Activated CD4-positive, alpha-beta memory T cell treated with anti-CD3 and anti-CD28 coated beads, Interleukin-2, amount 10 ng/mL, durations not matched to agents 7 days and 5 days (primary cell): ENCODE measurements at regions of chr16 and their contacts with region 1.

Region 1: GRCh38 chr16:71499775-71500364 is 10.7 kb upstream of the ZNF19 start:
- DNase-seq: peak; percentile 51
- H3K4me3 Mint-ChIP-seq: no peak overlapping the region
- H3K27ac Mint-ChIP-seq: no peak overlapping the region
- H3K4me1 Mint-ChIP-seq: no peaks in the 10 kb centered on the region
- H3K27me3 Mint-ChIP-seq: peaks cover 3% of the 10 kb centered on the region

Region 2: GRCh38 chr16:71412270-71413160 is 87.4 kb before region 1 on chr16:
- CTCF ChIA-PET with region 1: interaction called, 72 read pairs
- POLR2A ChIA-PET with region 1: no interaction called
- DNase-seq: peak; percentile 61
- H3K4me3 Mint-ChIP-seq: no peak overlapping the region
- H3K27ac Mint-ChIP-seq: no peak overlapping the region
- H3K4me1 Mint-ChIP-seq: peaks cover 7% of the 10 kb centered on the region
- H3K27me3 Mint-ChIP-seq: peaks cover 33% of the 10 kb centered on the region

Region 3: GRCh38 chr16:71484006-71484893 is 15.6 kb before region 1 on chr16:
- CTCF ChIA-PET with region 1: interaction called, 15 read pairs
- POLR2A ChIA-PET with region 1: no interaction called
- DNase-seq: peak; percentile 82
- H3K4me3 Mint-ChIP-seq: peak overlapping the region; percentile 79
- H3K27ac Mint-ChIP-seq: peak overlapping the region; percentile 77
- H3K4me1 Mint-ChIP-seq: peaks cover 22% of the 10 kb centered on the region
- H3K27me3 Mint-ChIP-seq: peaks cover 2% of the 10 kb centered on the region

Region 4: DNA sequence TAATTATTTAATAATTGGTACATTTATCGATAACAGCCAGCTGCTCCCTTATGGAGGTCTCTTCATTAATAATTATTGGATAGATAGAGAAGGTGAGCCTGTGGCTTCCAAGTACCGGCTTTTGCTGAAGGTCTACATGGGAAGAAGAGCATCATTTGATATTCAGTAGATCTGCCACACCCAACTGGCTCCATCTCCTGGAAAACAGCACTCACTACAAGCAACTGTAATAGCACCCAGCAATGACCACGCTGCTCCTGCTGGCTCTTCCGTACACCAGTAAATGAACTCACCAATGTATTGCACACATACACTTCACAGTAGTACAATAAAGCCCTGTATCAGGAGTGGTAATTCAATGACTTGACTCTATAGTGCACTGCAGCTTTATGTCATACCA is 145.6 kb after region 1 on chr16:
- CTCF ChIA-PET with region 1: no interaction called
- POLR2A ChIA-PET with region 1: no interaction called
- DNase-seq: no peak
- H3K4me3 Mint-ChIP-seq: no peak overlapping the region
- H3K27ac Mint-ChIP-seq: no peak overlapping the region
- H3K4me1 Mint-ChIP-seq: no peaks in the 10 kb centered on the region
- H3K27me3 Mint-ChIP-seq: no peaks in the 10 kb centered on the region